ENCODE measurements at regions of chr5 and their contacts with region 1.

Region 1: GRCh38 chr5:96984506-96985192 is 48.8 kb downstream of the LNPEP start:
- DNase-seq: no peak
- H3K4me3 ChIP-seq: no peak overlapping the region
- H3K27me3 ChIP-seq: no peaks in the 10 kb centered on the region
- CTCF ChIP-seq: no peak

Region 2: GRCh38 chr5:96997265-96997859 is 12.7 kb after region 1 on chr5:
- CTCF ChIA-PET with region 1: interaction called, 15 read pairs
- POLR2A ChIA-PET with region 1: no interaction called
- DNase-seq: no peak
- H3K4me3 ChIP-seq: no peak overlapping the region
- H3K27me3 ChIP-seq: no peaks in the 10 kb centered on the region
- CTCF ChIP-seq: peak; percentile 49

Region 3: DNA sequence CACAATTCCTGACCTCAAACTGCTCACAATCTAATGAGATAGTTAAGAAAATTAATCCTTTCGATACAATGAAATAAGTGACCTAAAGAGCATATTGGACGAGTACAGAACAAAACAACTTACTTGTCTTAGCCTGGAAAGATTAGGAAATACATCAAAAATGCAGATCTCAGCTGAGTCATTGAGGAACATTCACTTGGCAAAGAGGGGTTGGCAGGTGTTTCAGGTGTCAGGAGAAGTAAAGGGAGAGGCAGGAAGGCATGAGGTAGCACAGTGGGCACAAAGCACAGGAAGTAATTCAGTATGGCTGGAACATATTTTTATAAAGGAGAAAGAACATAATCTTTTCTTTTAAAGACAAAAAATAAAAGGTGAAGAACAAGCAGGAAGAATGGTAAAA is 1160.1 kb after region 1 on chr5:
- CTCF ChIA-PET with region 1: no interaction called
- POLR2A ChIA-PET with region 1: no interaction called
- DNase-seq: no peak
- H3K4me3 ChIP-seq: no peak overlapping the region
- H3K27me3 ChIP-seq: no peaks in the 10 kb centered on the region
- CTCF ChIP-seq: no peak